ENCODE measurements at regions of chr6 and their contacts with region 1.

Region 1: DNA sequence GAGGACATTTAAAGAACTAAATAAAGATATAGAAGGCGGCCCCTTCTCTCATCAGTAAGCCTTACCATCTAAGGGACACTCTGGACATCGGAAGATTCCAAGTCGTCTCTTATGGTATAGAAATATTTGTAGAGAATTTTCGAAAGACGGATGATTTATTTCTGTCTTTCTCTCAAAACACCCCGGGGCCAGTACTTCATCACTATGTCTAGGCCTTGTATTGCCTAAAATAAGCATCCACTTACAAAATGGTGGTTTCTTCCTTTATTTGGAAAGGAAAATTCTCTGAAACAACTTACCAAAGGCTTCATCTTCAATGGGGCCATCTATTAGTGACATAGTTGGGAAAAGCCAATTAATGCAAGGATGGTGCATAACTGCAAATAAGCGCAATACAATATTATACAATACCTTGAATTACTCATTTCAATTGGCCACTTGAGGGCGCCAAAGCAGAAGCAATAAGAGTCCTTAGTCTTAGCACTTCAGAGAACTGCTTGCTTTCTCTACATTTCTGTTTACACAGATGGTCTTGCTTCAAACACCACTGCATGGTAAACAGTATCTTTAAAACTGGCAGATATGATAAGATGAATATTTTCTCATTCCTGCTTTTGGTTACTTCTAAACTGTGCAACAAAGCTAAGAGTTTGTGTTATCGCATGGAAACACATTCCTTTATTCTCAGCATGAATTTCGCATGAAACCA is 113.2 kb downstream of the VIP start:
- DNase-seq: peak; percentile 50
- H3K4me3 Mint-ChIP-seq: no peak overlapping the region
- H3K27ac Mint-ChIP-seq: no peak overlapping the region
- H3K4me1 Mint-ChIP-seq: no peaks in the 10 kb centered on the region
- H3K27me3 Mint-ChIP-seq: no peaks in the 10 kb centered on the region
- CTCF ChIP-seq: peak; percentile 48

Region 2: DNA sequence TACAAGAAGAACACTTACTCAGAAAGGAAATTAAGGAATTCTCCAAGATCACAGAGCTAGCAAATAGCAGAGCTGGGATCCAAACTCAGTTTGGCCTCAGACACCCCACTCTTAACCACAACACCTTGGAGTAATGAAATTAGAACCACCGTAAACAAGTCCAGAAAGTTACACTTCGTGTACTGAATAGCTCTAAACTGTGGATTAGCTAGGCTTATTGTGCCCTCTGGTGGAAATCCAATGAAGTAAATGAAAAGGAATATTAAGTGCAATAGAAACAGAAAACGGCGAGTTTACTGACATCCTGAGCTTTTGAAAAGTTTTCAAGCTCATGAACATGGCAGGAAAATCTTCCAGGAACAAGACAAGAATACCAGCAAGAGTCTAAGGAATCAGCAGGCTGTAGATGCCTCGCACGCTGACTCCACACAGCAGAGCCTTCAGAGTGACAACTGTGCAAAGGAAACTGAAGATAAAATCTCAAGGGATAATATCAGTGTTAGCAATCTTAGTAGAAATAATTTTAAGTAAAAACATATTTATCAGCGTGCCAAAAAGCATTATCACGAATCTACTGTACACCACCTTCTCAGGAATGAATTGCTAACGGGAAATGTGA is 84.5 kb after region 1 on chr6:
- CTCF ChIA-PET with region 1: interaction called, 3 read pairs
- intact Hi-C with region 1: loop called (anchors 1 kb)
- DNase-seq: peak; percentile 6
- H3K4me3 Mint-ChIP-seq: no peak overlapping the region
- H3K27ac Mint-ChIP-seq: no peak overlapping the region
- H3K4me1 Mint-ChIP-seq: peaks cover 7% of the 10 kb centered on the region
- H3K27me3 Mint-ChIP-seq: no peaks in the 10 kb centered on the region
- CTCF ChIP-seq: peak; percentile 51

Region 3: DNA sequence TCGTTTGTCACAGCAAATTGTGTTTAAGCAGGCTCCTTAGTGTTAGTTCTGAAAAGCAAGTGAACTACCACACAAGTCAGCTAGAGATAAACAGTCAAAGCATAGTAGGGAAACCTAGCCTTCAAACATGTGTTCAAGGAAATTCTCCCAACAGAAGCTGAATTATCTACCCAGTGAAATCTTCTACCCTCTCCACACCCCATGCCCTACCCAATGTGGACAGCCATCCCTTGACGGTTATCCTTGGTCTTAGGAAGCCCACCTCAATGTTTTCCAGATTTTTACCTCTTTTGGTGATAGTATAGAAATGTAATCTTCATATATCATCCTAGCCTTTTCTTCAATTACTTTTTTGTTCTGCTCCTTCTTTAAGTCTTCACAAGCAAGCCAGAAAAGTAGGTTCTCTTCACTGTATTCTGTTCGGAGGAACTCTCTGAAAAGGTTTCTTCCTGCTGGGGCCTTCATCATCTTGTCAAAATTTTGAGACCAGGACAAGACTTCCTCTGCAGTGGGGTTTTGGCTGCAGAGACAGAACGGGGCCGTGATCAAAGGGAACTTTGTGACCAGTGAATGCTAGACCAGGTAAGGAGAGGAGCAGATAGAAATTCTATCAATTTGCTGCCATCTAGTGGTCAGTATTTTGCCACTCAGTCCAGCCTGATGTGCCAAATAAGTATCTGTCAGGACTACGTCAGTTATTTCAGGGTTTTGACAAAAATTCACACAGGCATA is 160.4 kb after region 1 on chr6:
- CTCF ChIA-PET with region 1: no interaction called
- intact Hi-C with region 1: loop called (anchors 5 kb)
- DNase-seq: peak; percentile 36
- H3K4me3 Mint-ChIP-seq: no peak overlapping the region
- H3K27ac Mint-ChIP-seq: no peak overlapping the region
- H3K4me1 Mint-ChIP-seq: no peaks in the 10 kb centered on the region
- H3K27me3 Mint-ChIP-seq: no peaks in the 10 kb centered on the region
- CTCF ChIP-seq: peak; percentile 37

Measured in Calu3 (cell line).